Head of caudate nucleus (tissue), 42 donors: ENCODE measurements at regions of chr2 and their contacts with region 1.

Region 1: GRCh38 chr2:70086838-70087701 is at the start of gene PCBP1:
- DNase-seq: peak; percentile 81 to 98 (median 92)

Region 2: DNA sequence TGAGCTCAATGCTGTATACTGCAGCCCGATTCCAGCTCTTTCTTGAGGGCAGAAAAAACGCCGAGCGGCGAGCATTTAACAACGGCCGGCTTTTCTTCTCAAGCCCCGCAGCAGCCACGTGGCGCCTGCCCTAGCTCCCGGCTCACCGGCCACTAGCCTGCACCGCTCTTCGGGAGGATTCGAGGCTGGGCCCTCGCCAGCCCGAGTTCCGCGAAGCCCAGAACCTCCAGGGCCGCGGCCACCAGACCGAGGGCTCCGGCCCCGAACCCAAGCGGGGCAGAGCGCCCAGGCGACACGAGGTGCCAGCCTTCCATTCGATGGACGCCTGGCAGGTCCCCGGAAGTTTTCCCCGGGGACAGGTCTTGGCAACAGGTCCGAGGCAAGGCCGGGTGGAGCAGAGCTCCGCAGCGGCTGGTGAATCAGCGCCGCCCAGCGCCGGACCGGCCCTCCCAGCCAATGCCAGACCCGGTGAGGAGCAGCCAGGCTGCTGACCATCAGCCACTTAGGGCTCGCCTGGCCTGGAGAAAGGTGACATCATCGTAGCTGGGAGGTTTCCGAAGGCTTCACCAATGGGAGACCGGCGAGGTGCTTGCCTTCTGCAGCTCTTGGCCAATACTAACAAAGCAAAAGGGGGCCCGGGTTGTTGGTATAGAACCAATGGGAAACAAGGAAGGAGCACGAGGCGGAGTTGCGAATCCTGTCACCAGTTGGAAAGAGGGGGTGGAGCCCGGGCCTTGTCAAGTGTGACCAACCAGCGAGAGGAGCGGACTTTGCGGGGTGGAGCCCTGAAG is 172.7 kb before region 1 on chr2:
- intact Hi-C with region 1: loop called (anchors 2 kb)
- DNase-seq: peak; percentile 95 to 100 (median 100)

Region 3: DNA sequence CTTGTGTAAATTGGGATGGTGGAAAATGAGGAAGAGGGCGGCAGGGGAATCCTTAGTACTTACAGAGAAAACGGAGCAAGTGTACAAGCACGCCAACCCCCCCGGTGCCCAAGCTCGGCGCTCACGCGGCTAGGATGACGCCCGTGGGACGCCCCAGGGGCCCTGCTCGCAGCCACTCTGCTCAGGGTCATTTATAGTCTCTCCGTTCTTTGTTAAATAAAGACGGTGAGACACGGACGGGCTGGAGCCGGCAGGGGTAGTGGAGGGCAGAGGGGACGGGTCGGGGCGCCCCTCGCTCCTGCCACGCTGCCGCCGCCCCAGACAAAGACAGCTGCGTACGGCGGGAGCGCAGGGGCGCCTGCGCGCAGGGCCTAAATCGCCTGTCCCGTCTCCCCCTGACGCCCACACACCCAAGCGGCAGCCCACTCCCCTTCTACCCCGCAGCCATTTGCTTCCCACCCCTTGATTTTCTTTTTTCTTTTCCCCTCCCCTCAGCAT is 38.0 kb after region 1 on chr2:
- intact Hi-C with region 1: loop called (anchors 2 kb)
- DNase-seq: peak in 41 of 42 donors; percentile 47 to 87 (median 73)

Region 4: DNA sequence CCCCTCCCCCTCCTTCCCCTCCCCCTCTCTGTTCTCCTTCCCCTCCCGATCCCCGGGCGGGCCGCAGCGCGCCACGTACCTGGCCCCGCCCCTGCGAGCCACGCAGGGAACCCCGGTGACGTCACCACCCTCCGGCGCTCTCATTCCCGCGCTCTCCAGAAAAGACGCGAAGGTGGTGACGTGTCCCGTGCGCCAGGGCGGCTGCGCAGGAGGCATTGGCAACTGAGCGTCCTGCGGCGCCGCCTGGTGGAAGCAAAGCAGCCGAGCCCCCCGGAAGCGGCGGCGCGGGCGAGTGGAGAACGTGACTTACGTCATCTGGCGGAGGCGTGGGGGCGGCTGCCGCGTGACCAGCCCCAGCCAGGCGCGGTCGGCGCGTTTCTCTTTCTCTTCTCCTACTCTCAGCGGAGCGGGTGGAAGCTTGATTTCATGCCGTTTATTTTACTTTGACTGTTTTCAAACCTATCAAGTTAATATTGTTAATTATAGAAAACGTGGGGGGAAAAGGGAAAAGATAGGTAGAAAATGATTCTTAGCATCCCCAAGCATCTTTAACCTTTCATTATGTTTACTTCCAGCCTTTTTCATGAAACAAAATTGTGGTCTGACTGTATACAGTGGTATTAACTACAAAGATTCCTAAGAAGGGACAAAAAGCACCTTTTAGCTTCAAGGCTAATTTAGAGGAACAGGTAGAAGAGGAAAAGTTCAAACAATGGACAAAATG is 55.7 kb after region 1 on chr2:
- intact Hi-C with region 1: loop called (anchors 2 kb)
- DNase-seq: peak; percentile 88 to 99 (median 96)

Region 5: GRCh38 chr2:70181363-70181956 is 94.4 kb after region 1 on chr2:
- intact Hi-C with region 1: no loop called
- DNase-seq: no peak

Region 6: DNA sequence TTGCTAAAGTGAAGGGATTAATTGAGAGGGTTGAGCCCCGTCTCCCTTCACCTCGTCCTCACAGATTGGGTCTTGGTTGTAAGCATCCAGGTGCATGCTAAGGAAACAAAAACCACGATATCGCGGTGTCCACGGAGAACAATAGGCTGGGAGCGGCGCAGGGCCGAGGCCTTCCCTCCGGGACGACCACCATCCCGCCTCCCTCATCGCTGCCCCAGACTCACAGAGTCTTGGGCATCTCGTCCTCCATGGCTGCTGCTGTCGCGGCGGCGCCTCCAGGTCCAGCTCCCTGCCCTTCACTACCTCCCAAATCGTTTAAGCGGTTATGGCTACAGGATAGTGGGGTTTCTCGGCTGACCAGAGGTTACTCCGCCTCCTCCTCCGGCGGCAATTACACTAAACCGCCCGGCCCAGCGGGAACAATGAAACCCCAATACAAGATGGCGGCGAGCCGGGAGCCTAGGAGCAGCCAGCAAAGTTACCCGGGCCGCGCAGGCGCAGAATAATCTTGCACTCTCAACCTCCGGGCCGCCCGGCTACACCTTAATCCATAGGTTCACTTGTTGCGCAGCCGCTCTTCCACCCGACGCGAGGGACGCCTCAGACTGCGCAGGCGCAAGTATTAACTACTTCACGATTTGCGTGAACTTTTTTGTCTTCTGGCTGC is 161.2 kb after region 1 on chr2 and contains the start of gene TIA1:
- intact Hi-C with region 1: loop called (anchors 5 kb)
- DNase-seq: peak; percentile 87 to 98 (median 95)